Sciatic nerve (tissue), 2 donors: ENCODE measurements at regions of chr9 and their contacts with region 1.

Region 1: DNA sequence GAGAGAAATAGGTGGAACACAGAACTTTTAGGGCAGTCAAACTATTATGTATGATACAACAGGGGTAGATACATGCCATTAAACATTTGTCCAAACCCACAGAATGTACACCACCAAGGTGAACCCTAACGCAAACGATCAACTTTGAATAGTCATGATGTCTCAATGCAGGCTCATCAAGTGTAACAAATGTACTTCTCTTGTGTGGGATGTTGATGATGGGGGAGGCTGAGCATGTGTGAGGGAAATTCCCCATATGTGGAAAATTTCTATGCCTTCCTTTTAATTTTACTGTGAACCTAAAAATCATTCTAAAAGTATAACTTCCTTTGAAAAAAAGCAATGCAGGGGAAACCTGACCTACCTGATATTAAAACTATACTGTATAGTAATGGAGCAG is 201.4 kb upstream of the RASEF start:
- DNase-seq: no peak
- ATAC-seq: no peak

Region 2: GRCh38 chr9:83294816-83295215 is 30.5 kb after region 1 on chr9:
- intact Hi-C with region 1: loop called (anchors 2 kb)
- DNase-seq: no peak
- ATAC-seq: no peak